Dendritic cell treated with granulocyte-macrophage colony-stimulating factor and Interleukin-4, amounts not matched to agents 40 ng/mL and 50 ng/mL, for 4 days (primary cell): ENCODE measurements at regions of chr11 and their contacts with region 1.

Region 1: GRCh38 chr11:125625630-125626287 is 796 bp downstream of the CHEK1 start:
- H3K4me3 Mint-ChIP-seq: peak overlapping the region; percentile 100
- H3K27ac Mint-ChIP-seq: peak overlapping the region; percentile 97
- H3K4me1 Mint-ChIP-seq: peaks cover 22% of the 10 kb centered on the region
- H3K27me3 Mint-ChIP-seq: no peaks in the 10 kb centered on the region

Region 2: GRCh38 chr11:125568970-125569914 is 56.5 kb before region 1 on chr11 and contains the start of gene EI24:
- intact Hi-C with region 1: loop called (anchors 1 kb)
- H3K4me3 Mint-ChIP-seq: peak within 1 kb of the TSS; percentile 84
- H3K27ac Mint-ChIP-seq: peak within 1 kb of the TSS; percentile 85
- H3K4me1 Mint-ChIP-seq: peaks cover 14% of the 10 kb centered on the region
- H3K27me3 Mint-ChIP-seq: no peaks in the 10 kb centered on the region

Region 3: GRCh38 chr11:125874556-125875124 is 248.9 kb after region 1 on chr11:
- intact Hi-C with region 1: loop called (anchors 5 kb)
- H3K4me3 Mint-ChIP-seq: no peak overlapping the region
- H3K27ac Mint-ChIP-seq: no peak overlapping the region
- H3K4me1 Mint-ChIP-seq: peaks cover 6% of the 10 kb centered on the region
- H3K27me3 Mint-ChIP-seq: peaks cover 5% of the 10 kb centered on the region

Region 4: GRCh38 chr11:125887373-125888324 is 261.9 kb after region 1 on chr11 and contains the start of gene HYLS1:
- intact Hi-C with region 1: loop called (anchors 5 kb)
- H3K4me3 Mint-ChIP-seq: peak within 1 kb of the TSS; percentile 85
- H3K27ac Mint-ChIP-seq: peak within 1 kb of the TSS; percentile 91
- H3K4me1 Mint-ChIP-seq: peaks cover 21% of the 10 kb centered on the region
- H3K27me3 Mint-ChIP-seq: peaks cover 3% of the 10 kb centered on the region